Heart left ventricle (tissue), 16 donors: ENCODE measurements at regions of chr19 and their contacts with region 1.

Region 1: GRCh38 chr19:55653758-55654539 is 886 bp upstream of the U2AF2 start:
- DNase-seq: peak; percentile 99 to 100 (median 99)
- ATAC-seq: peak; percentile 72 to 84 (median 79)
- H3K4me3 ChIP-seq: peak overlapping the region; percentile 50 to 99 (median 93)
- H3K27ac ChIP-seq: peak overlapping the region; percentile 94 to 100 (median 99)
- H3K4me1 ChIP-seq: peaks cover 12 to 48% (median 42%) of the 10 kb centered on the region in 12 donors
- H3K27me3 ChIP-seq: no peaks in the 10 kb centered on the region
- CTCF ChIP-seq: peak; percentile 97 to 100 (median 99)
- POLR2A ChIP-seq: peak in 1 of 2 donors; percentile 71

Region 2: DNA sequence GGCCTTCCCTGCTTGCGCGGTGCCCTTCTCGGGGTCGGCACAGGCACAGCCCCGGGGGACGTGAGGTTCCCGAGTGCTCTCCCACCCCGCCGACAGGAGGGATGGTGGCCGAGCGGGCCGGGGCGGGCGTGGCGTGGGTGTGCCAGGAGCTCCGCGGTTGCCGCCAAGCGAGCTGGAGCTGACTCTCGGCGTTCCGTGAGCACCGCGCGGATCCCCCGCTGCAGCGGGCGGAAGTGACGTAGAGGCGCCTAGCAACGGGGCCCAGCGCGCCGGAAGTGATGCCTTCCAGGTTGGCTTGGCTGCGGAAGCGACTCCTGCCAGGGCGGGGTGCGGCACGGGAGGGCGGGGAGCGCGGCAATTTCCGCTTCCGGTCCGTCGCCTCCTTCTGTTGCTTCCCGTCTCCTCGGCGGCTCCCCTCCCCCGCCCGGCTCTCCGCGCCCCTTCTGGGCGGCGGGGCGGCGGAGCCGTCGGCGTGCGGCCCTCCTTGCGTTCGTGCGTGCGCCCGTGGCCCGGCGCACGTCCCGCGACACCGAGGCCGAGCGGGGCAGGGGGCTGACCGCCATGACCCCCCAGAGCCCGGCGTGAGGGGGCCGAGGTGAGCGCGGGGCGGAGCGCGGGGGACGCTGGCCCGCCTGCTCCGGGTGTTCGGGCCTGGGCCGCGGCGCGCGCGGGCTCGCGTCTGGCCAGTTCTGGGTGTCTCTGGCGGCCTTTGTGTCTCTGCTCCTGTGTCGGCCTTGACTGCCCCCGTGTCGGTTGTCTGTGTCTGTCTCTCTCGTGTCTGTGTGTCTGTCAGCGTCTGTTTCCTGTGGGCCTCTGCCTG is 21.1 kb after region 1 on chr19 and contains the start of gene EPN1:
- intact Hi-C with region 1: loop called in 3 of 10 experiments (anchors 1 to 2 kb)
- DNase-seq: peak; percentile 97 to 98 (median 98)
- ATAC-seq: peak; percentile 85 to 95 (median 93)
- H3K4me3 ChIP-seq: peak within 1 kb of the TSS; percentile 61 to 99 (median 80)
- H3K27ac ChIP-seq: peak within 1 kb of the TSS; percentile 84 to 99 (median 92)
- H3K4me1 ChIP-seq: peaks cover 12 to 66% (median 37%) of the 10 kb centered on the region in 12 donors
- H3K27me3 ChIP-seq: no peaks in the 10 kb centered on the region
- CTCF ChIP-seq: no peak
- POLR2A ChIP-seq: peak in 1 of 2 donors; percentile 50
- total RNA-seq, gene EPN1: 125 to 377 (median 189) TPM